Panc1 (cell line): ENCODE measurements at regions of chr18 and their contacts with region 1.

Region 1: GRCh38 chr18:54558609-54559585 is 32.1 kb upstream of the DYNAP start:
- DNase-seq: peak; percentile 25
- ATAC-seq: no peak
- H3K4me3 ChIP-seq: no peak overlapping the region
- H3K27ac ChIP-seq: no peak overlapping the region
- H3K4me1 ChIP-seq: no peaks in the 10 kb centered on the region
- H3K27me3 ChIP-seq: no peaks in the 10 kb centered on the region
- CTCF ChIP-seq: peak; percentile 46; the same call in 1 of the 2 replicates

Region 2: GRCh38 chr18:54647176-54647575 is 88.3 kb after region 1 on chr18:
- CTCF ChIA-PET with region 1: no interaction called
- POLR2A ChIA-PET with region 1: no interaction called
- in situ Hi-C with region 1: no loop called
- intact Hi-C with region 1: loop called (anchors 10 kb)
- DNase-seq: no peak
- ATAC-seq: no peak
- H3K4me3 ChIP-seq: no peak overlapping the region
- H3K27ac ChIP-seq: no peak overlapping the region
- H3K4me1 ChIP-seq: no peaks in the 10 kb centered on the region
- H3K27me3 ChIP-seq: no peaks in the 10 kb centered on the region
- CTCF ChIP-seq: peak; percentile 30; the same call in 1 of the 2 replicates

Region 3: DNA sequence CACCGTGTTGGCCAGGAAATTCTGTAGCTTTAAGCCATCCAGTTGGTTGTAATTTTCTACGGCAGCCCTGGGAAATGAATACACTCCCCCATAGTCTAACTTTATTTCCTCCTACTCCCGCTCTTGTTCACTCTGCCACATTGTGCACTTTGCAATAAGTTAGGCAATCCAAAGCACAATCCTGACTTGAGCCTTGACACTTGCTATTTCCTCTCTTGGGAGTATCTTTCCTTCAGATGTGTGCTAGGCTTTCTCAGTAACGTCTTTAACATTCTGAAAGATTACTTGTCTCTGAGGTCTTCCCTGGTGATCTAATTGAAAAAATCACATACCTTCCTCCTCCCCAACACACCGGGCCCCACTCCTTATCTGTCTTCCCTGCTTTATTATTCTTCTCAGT is 203.5 kb after region 1 on chr18:
- CTCF ChIA-PET with region 1: no interaction called
- POLR2A ChIA-PET with region 1: no interaction called
- in situ Hi-C with region 1: no loop called
- intact Hi-C with region 1: no loop called
- DNase-seq: no peak
- ATAC-seq: no peak
- H3K4me3 ChIP-seq: no peak overlapping the region
- H3K27ac ChIP-seq: no peak overlapping the region
- H3K4me1 ChIP-seq: no peaks in the 10 kb centered on the region
- H3K27me3 ChIP-seq: no peaks in the 10 kb centered on the region
- CTCF ChIP-seq: no peak